ENCODE measurements at regions of chr17 and their contacts with region 1.

Region 1: DNA sequence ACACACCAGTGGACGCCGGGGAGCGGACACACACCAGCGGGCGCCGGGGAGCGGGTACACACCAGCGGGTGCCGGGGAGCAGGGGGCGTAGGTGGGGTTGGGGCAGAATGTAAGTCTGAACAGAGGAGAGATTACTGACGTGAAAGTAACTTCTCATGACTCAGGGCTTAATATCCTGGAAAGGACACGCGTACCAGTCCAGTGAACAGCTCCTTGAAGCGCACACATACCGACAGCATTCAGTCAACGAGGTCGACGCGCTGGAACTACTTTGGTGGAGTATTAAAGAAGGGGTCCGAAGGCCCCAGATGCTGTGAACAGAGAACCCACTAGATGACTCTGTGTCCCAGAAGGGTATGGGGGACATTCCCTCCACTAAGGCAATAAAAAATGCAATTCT is 129.6 kb downstream of the ENGASE start:
- DNase-seq: no peak
- H3K4me3 ChIP-seq: no peak overlapping the region
- H3K27ac ChIP-seq: no peak overlapping the region
- H3K4me1 ChIP-seq: no peaks in the 10 kb centered on the region
- H3K27me3 ChIP-seq: peaks cover 92% of the 10 kb centered on the region
- CTCF ChIP-seq: no peak

Region 2: GRCh38 chr17:78883164-78884122 is 320.8 kb before region 1 on chr17:
- CTCF ChIA-PET with region 1: interaction called, 11 read pairs
- POLR2A ChIA-PET with region 1: no interaction called
- intact Hi-C with region 1: no loop called
- DNase-seq: peak; percentile 40
- H3K4me3 ChIP-seq: no peak overlapping the region
- H3K27ac ChIP-seq: no peak overlapping the region
- H3K4me1 ChIP-seq: peaks cover 5% of the 10 kb centered on the region
- H3K27me3 ChIP-seq: no peaks in the 10 kb centered on the region
- CTCF ChIP-seq: no peak

Region 3: DNA sequence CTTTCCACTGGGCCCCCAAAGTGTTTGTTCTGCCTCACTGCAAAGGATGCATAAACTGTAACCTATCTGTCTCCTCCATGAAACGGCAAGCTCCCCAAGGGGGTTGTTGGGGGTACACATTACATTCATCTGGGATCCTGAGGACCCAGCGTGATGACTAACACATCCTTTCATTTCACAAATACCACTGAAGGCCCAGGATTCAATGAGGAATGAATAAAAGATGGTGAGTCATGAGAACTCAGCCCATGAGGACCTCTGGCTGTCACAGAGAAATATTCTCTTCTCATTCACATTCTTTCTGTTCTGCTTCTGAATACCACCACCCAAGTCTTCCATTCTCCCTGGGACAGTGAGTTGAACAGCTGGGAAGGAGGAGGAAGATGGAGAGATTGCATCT is 256.8 kb after region 1 on chr17:
- CTCF ChIA-PET with region 1: no interaction called
- POLR2A ChIA-PET with region 1: no interaction called
- intact Hi-C with region 1: no loop called
- DNase-seq: peak; percentile 31
- H3K4me3 ChIP-seq: no peak overlapping the region
- H3K27ac ChIP-seq: no peak overlapping the region
- H3K4me1 ChIP-seq: no peaks in the 10 kb centered on the region
- H3K27me3 ChIP-seq: peaks cover 20% of the 10 kb centered on the region
- CTCF ChIP-seq: no peak